ENCODE measurements at regions of chr20 and their contacts with region 1.

Region 1: DNA sequence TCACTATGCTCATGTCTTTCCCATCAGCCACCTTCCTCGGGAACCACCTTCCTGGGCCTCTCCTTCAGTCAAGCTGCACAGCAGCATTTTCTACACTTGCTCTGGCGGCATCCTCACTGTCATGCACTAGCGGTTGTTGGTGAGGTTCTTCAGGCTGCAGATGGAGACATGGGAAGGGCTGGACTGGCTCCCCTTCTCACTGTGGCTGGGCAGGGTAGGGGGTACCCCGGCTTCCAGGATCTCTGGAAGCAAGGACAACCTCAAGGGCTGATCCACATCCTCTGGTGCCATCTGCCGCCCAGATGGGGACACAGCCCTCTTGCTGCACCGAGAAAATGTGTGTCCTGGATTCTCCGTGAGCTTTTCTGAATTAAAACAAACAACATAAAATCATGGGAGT is 180.1 kb upstream of the RNF24 start:
- DNase-seq: no peak
- ATAC-seq: no peak
- H3K4me3 Mint-ChIP-seq: no peak overlapping the region
- H3K27ac Mint-ChIP-seq: no peak overlapping the region
- H3K4me1 Mint-ChIP-seq: no peaks in the 10 kb centered on the region
- H3K27me3 Mint-ChIP-seq: peaks cover 7% of the 10 kb centered on the region

Region 2: DNA sequence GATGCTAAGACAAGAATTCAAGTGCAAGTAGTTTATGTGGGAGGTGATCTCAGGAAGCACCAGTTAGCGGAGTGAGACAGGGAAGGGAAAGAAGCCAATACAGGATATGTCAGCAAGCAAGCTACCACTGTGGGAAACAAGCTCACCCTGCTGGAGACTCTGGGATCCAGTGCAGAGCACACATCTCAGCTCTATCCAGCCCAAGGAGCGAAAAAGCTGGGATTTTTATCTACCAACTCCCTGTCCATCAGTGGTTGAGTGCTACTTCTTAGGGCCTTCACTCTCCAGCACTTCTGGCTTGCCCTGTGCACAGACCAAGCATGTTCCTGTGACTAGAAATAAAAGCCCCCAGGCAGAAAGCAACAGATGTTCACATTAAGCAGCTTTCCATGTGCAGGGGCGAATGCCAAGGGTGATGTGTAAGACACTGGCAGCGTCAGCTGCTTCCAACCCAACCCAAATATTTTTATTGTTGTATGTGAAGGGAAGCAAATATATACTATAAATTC is 169.4 kb before region 1 on chr20:
- CTCF ChIA-PET with region 1: no interaction called
- POLR2A ChIA-PET with region 1: interaction called, 10 read pairs
- intact Hi-C with region 1: no loop called
- DNase-seq: no peak
- ATAC-seq: no peak
- H3K4me3 Mint-ChIP-seq: no peak overlapping the region
- H3K27ac Mint-ChIP-seq: no peak overlapping the region
- H3K4me1 Mint-ChIP-seq: no peaks in the 10 kb centered on the region
- H3K27me3 Mint-ChIP-seq: peaks cover 2% of the 10 kb centered on the region

Region 3: GRCh38 chr20:4512891-4513550 is 317.5 kb after region 1 on chr20:
- CTCF ChIA-PET with region 1: no interaction called
- POLR2A ChIA-PET with region 1: no interaction called
- intact Hi-C with region 1: no loop called
- DNase-seq: no peak
- ATAC-seq: no peak
- H3K4me3 Mint-ChIP-seq: no peak overlapping the region
- H3K27ac Mint-ChIP-seq: no peak overlapping the region
- H3K4me1 Mint-ChIP-seq: no peaks in the 10 kb centered on the region
- H3K27me3 Mint-ChIP-seq: peaks cover 31% of the 10 kb centered on the region